ENCODE measurements at regions of chr11 and their contacts with region 1.

Region 1: DNA sequence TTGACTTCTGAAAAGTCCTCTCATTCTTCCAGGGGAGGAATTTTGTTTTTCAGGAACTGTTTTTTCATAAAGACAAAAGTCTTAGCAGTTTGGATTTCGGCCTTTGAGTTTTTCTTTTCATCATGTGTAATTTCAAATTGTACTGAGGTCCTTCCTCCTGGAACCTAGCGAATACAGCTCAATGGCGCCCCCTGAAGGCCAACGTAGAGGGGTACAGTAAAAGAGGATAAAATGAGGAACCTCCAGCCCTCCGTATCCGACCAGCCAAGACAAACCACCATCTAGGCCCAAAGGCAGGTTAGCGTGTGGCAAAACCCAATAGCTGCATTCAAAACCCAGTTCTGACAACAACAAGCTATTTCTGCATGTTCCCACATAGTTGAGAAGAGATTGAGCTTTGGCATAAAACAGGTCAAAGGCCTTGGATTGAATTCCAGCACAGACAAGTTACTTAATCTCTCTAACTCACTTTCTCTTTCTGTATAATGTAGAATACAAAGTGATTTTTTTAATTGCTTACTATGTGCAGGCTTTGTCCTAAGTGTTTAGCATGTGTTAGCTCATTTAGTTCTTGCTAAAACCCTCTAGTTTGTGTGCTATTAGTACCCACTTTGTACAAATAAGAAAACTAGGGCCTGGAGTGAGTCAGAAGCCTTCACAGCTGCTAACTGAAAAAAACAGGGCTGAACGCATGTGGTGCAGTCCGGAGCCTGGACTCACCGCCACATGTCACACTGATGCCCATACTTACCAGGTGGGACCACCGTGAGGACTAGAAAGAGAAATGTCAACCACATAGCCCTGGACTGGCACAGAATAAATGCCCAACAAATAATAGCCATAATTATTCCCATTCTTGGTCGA is 43.2 kb upstream of the ETS1 start:
- DNase-seq: peak; percentile 90
- H3K4me3 Mint-ChIP-seq: no peak overlapping the region
- H3K27ac Mint-ChIP-seq: no peak overlapping the region
- H3K4me1 Mint-ChIP-seq: no peaks in the 10 kb centered on the region
- H3K27me3 Mint-ChIP-seq: no peaks in the 10 kb centered on the region
- CTCF ChIP-seq: peak; percentile 84

Region 2: GRCh38 chr11:128172046-128172878 is 458.3 kb before region 1 on chr11:
- CTCF ChIA-PET with region 1: interaction called, 102 read pairs
- POLR2A ChIA-PET with region 1: interaction called, 3 read pairs
- intact Hi-C with region 1: loop called (anchors 1 kb)
- DNase-seq: peak; percentile 87
- H3K4me3 Mint-ChIP-seq: no peak overlapping the region
- H3K27ac Mint-ChIP-seq: peak overlapping the region; percentile 88
- H3K4me1 Mint-ChIP-seq: peaks cover 23% of the 10 kb centered on the region
- H3K27me3 Mint-ChIP-seq: no peaks in the 10 kb centered on the region
- CTCF ChIP-seq: peak; percentile 78

Region 3: GRCh38 chr11:128279866-128280265 is 350.7 kb before region 1 on chr11:
- CTCF ChIA-PET with region 1: interaction called, 160 read pairs
- POLR2A ChIA-PET with region 1: interaction called, 3 read pairs
- intact Hi-C with region 1: no loop called
- DNase-seq: peak; percentile 30
- H3K4me3 Mint-ChIP-seq: no peak overlapping the region
- H3K27ac Mint-ChIP-seq: peak overlapping the region; percentile 27
- H3K4me1 Mint-ChIP-seq: peaks cover 10% of the 10 kb centered on the region
- H3K27me3 Mint-ChIP-seq: no peaks in the 10 kb centered on the region
- CTCF ChIP-seq: no peak

Region 4: DNA sequence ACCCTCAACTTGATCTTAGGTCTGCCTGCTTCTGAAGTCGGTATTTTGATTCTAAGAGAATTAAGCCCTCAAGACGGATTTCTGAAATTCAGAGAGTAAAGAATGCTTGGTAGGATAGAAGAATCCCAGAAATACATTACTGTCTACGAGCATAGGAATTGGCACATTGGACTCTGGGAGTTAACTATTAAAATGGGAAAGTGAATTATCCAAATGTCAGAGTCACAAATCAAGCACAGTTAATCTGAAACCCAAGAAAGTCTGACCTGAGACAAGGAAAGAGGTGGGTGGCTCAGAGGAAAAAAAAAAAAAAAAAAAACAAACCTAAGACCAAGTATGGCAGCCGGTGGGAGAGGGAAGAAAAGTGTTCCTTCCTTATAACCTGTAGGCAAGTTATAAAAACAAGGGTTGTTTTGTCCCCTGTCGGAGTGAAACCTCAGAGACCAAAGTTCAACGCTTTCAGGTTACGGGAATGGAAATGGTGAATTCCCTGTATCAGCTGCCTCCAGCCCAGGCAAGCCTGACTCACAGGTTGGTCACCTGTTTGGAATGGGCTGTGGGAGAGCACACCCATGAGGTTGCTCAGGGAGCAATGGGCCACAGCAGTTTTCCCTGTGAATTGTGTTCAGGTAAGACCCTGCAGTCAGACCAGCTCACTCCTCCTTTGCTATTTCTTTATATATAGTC is 182.3 kb before region 1 on chr11:
- CTCF ChIA-PET with region 1: interaction called, 15 read pairs
- POLR2A ChIA-PET with region 1: interaction called, 3 read pairs
- intact Hi-C with region 1: loop called (anchors 1 kb)
- DNase-seq: peak; percentile 87
- H3K4me3 Mint-ChIP-seq: peak overlapping the region; percentile 61
- H3K27ac Mint-ChIP-seq: peak overlapping the region; percentile 88
- H3K4me1 Mint-ChIP-seq: peaks cover 22% of the 10 kb centered on the region
- H3K27me3 Mint-ChIP-seq: no peaks in the 10 kb centered on the region
- CTCF ChIP-seq: peak; percentile 10

Region 5: DNA sequence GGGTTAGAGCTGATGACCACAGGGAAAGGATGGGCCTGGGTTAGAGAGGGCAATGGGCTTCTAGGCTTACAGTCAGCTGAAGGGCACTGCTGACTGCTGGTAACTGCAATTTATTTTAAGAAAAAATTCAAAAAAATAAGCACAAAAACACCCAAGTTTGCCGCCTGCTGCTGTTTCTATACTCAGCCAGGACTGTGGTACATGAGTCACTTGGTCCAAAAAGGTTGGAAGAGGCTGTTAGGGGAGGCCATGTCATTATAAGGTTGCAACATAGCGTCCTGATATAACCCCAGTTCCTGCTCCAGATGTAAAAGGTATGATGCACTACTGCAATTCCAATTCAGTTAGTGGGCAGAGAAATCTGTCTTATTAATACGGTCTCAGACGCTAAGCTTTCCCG is 142.1 kb before region 1 on chr11:
- CTCF ChIA-PET with region 1: interaction called, 33 read pairs
- POLR2A ChIA-PET with region 1: no interaction called
- intact Hi-C with region 1: loop called (anchors 1 kb)
- DNase-seq: peak; percentile 92
- H3K4me3 Mint-ChIP-seq: no peak overlapping the region
- H3K27ac Mint-ChIP-seq: no peak overlapping the region
- H3K4me1 Mint-ChIP-seq: peaks cover 44% of the 10 kb centered on the region
- H3K27me3 Mint-ChIP-seq: no peaks in the 10 kb centered on the region
- CTCF ChIP-seq: no peak

Region 6: DNA sequence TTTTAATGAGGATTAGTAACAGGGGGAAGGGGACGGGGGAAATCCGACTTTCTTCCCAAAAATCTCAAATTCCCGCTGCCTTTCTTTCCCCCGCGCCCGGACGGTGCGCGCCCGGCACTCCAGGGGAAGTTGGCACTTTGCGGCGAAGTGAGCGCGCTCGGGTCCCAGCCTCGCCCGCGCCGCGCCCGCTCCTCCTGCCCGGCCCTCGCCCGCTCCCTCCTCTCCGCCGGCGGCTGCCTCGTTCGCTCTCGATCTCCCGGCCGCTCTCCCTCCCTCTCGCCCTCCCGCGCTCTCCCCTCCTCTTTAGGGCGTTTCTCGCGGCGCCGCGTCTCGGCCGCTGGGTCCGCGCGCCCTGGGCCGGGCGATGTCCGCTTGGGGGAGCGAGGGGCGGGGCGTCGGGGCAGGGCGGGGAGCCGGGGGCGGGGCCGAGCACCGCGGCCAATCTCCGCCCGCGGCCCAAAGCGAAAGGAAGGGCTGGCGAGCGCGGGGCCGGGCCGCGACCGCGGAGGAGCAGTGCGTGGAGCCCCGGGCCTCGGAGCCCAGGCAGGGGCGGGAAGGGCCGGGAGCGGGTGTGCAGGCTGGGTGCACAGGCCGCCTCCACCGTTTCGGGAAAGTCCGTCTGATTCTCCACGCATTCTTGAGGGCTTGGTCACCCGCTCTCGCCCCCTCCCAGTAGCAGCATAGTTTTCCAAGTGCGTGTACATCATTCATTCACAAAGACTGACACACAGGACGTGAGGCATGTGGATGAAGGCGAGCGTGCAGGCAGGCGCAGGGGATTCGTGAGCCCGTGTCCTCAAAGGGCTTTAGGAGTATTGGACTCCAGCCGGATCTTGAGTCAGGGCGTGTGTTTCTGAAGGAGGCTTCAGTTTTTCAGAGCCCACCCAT is 108.3 kb before region 1 on chr11:
- CTCF ChIA-PET with region 1: interaction called, 12 read pairs
- POLR2A ChIA-PET with region 1: interaction called, 3 read pairs
- intact Hi-C with region 1: loop called (anchors 1 kb)
- DNase-seq: peak; percentile 96
- H3K4me3 Mint-ChIP-seq: peak overlapping the region; percentile 78
- H3K27ac Mint-ChIP-seq: peak overlapping the region; percentile 79
- H3K4me1 Mint-ChIP-seq: peaks cover 54% of the 10 kb centered on the region
- H3K27me3 Mint-ChIP-seq: no peaks in the 10 kb centered on the region
- CTCF ChIP-seq: no peak

Measured in MCF 10A (cell line).